ENCODE measurements at regions of chr1 and their contacts with region 1.

Region 1: GRCh38 chr1:152047730-152048402 is 11.1 kb upstream of the S100A11 start:
- DNase-seq: peak; percentile 92 to 95
- H3K4me3 ChIP-seq: peak overlapping the region; percentile 25
- H3K4me3 Mint-ChIP-seq: peak overlapping the region; percentile 72
- H3K27ac Mint-ChIP-seq: peak overlapping the region; percentile 96
- H3K4me1 ChIP-seq: peaks cover 14% of the 10 kb centered on the region
- H3K4me1 Mint-ChIP-seq: peaks cover 21% of the 10 kb centered on the region
- H3K27me3 ChIP-seq: no peaks in the 10 kb centered on the region
- H3K27me3 Mint-ChIP-seq: peaks cover 2% of the 10 kb centered on the region
- CTCF ChIP-seq: peak; percentile 63 to 80

Region 2: DNA sequence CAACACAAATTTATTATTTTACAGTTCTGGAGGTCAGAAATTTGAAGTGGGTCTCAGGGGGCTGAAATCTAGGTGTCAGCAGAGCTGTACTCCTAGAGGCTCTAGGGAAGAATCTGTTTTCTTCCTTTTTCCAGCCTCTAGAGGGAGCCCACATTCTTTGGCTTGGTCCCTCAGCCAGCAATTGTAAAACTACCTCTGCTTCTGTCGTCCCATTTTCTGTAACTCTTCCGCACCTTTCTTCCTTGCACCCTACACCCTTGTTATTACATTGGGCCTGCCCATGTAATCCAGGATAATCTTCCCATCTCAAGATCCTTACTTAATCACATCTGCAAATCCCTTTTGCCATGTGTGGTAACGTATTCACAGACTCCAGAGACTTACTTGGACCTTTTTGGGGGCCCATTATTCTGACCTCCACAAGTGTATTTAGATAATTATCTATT is 113.8 kb before region 1 on chr1:
- CTCF ChIA-PET with region 1: no interaction called
- POLR2A ChIA-PET with region 1: no interaction called
- intact Hi-C with region 1: no loop called
- DNase-seq: peak; percentile 48 to 78
- H3K4me3 ChIP-seq: no peak overlapping the region
- H3K4me3 Mint-ChIP-seq: no peak overlapping the region
- H3K27ac Mint-ChIP-seq: peak overlapping the region; percentile 63
- H3K4me1 ChIP-seq: peaks cover 32% of the 10 kb centered on the region
- H3K4me1 Mint-ChIP-seq: peaks cover 34% of the 10 kb centered on the region
- H3K27me3 ChIP-seq: no peaks in the 10 kb centered on the region
- H3K27me3 Mint-ChIP-seq: no peaks in the 10 kb centered on the region
- CTCF ChIP-seq: peak; percentile 85 to 87

Region 3: GRCh38 chr1:152034646-152035405 is 13.0 kb before region 1 on chr1:
- CTCF ChIA-PET with region 1: interaction called, 23 read pairs
- POLR2A ChIA-PET with region 1: interaction called, 16 read pairs
- intact Hi-C with region 1: loop called (anchors 1 kb)
- DNase-seq: peak; percentile 78 to 82
- H3K4me3 ChIP-seq: peak overlapping the region; percentile 85
- H3K4me3 Mint-ChIP-seq: peak overlapping the region; percentile 97
- H3K27ac Mint-ChIP-seq: peak overlapping the region; percentile 94
- H3K4me1 ChIP-seq: peaks cover 18% of the 10 kb centered on the region
- H3K4me1 Mint-ChIP-seq: peaks cover 7% of the 10 kb centered on the region
- H3K27me3 ChIP-seq: no peaks in the 10 kb centered on the region
- H3K27me3 Mint-ChIP-seq: no peaks in the 10 kb centered on the region
- CTCF ChIP-seq: peak; percentile 80 to 88

Region 4: DNA sequence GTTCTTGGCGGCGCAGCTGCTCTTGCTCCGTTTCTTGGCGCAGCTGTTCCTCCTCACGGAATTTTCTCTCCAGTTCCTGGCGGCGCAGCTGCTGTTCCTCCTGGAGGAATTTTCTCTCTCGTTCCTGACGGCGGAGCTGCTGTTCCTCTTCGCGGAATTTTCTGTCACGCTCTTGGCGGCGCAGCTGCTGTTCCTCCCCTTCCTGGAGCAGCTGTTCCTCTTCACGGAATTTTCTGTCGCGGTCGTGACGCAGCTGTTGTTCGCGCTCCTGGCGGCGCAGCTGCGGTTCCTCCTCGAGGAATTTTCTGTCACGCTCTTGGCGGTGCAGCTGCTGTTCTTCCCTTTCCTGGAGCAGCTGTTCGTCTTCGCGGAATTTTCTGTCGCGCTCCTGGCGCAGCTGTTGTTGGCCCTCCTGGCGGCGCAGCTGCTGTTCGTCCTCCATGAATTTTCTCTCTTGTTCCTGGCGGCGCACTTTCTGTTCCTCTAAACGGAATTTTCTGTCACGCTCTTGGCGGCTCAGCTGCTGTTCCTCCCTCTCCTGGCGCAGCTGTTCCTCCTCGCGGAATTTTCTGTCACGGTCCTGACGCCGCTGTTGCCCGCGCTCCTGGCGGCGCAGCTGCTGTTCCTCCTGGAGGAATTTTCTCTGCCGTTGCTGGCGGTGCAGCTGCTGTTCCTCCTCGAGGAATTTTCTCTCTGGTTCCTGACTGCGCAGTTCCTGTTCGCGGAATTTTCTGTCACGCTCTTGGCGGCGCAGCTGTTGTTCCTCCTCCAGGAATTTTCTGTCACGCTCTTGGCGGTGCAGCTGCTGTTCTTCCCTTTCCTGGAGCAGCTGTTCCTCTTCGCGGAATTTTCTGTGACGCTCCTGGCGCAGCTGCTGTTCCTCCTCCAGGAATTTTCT is 60.4 kb after region 1 on chr1:
- CTCF ChIA-PET with region 1: interaction called, 4 read pairs
- POLR2A ChIA-PET with region 1: interaction called, 4 read pairs
- intact Hi-C with region 1: loop called (anchors 1 kb)
- DNase-seq: peak; percentile 63 to 73
- H3K4me3 ChIP-seq: peak overlapping the region; percentile 42
- H3K4me3 Mint-ChIP-seq: no peak overlapping the region
- H3K27ac Mint-ChIP-seq: no peak overlapping the region
- H3K4me1 ChIP-seq: peaks cover 4% of the 10 kb centered on the region
- H3K4me1 Mint-ChIP-seq: peaks cover 10% of the 10 kb centered on the region
- H3K27me3 ChIP-seq: peaks cover 8% of the 10 kb centered on the region
- H3K27me3 Mint-ChIP-seq: peaks cover 9% of the 10 kb centered on the region
- CTCF ChIP-seq: peak in 1 of 2 experiments; percentile 0

Region 5: DNA sequence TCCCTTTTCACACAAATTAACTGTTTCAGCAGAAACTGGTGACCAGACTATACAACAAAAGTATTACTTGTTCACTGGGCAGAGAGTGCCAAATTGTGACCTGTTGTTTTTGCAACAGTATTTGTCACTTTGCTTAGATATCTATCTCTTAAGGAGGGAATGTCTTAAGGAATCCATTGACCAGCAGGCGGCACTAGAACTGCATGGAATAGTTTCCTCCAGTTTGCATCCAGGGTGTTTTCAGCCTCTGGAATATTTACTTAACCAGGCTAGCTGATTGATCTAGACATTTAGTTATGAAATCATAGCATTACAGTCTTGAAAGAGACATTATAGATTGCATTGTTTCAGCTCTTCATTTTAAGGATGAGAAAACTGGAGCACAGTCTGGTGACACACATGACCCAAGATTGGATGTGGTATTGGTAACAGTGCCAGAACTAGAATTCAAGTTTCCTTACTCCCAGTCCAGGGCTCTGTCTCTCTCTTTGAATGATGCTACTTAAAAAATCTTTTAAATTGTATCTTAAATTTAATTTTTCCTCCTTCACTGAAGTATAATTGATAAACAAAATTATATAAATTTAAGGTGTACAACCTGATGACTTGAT is 94.2 kb after region 1 on chr1:
- CTCF ChIA-PET with region 1: no interaction called
- POLR2A ChIA-PET with region 1: no interaction called
- intact Hi-C with region 1: loop called (anchors 1 kb)
- DNase-seq: peak; percentile 61 to 70
- H3K4me3 ChIP-seq: no peak overlapping the region
- H3K4me3 Mint-ChIP-seq: no peak overlapping the region
- H3K27ac Mint-ChIP-seq: no peak overlapping the region
- H3K4me1 ChIP-seq: no peaks in the 10 kb centered on the region
- H3K4me1 Mint-ChIP-seq: no peaks in the 10 kb centered on the region
- H3K27me3 ChIP-seq: no peaks in the 10 kb centered on the region
- H3K27me3 Mint-ChIP-seq: peaks cover 5% of the 10 kb centered on the region
- CTCF ChIP-seq: peak; percentile 81 to 89

Region 6: GRCh38 chr1:152227310-152227928 is 179.6 kb after region 1 on chr1:
- CTCF ChIA-PET with region 1: interaction called, 3 read pairs
- POLR2A ChIA-PET with region 1: no interaction called
- intact Hi-C with region 1: loop called (anchors 5 kb)
- DNase-seq: peak in 1 of 2 experiments; percentile 20
- H3K4me3 ChIP-seq: no peak overlapping the region
- H3K4me3 Mint-ChIP-seq: no peak overlapping the region
- H3K27ac Mint-ChIP-seq: no peak overlapping the region
- H3K4me1 ChIP-seq: no peaks in the 10 kb centered on the region
- H3K4me1 Mint-ChIP-seq: no peaks in the 10 kb centered on the region
- H3K27me3 ChIP-seq: no peaks in the 10 kb centered on the region
- H3K27me3 Mint-ChIP-seq: peaks cover 6% of the 10 kb centered on the region
- CTCF ChIP-seq: peak in 1 of 2 experiments; percentile 29

Region 7: DNA sequence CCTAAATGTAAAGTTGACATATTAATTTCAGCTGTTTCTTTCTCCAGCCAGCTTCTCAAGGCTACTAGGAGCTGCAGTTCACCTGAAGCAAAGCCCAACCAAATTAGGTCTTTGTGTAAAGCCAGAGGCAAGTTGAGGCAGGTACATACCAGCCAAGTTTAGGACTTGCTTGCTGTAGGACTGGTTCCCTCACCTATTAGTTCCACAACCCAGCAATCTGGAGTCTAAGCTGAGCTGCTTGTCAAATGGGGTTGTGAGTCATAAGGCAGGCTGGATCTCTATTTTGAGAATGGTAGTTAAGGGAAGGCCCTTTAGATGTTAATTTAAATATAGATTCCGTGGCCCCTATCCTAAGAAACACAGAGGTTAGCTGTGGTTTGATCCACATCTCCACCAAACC is 319.6 kb after region 1 on chr1:
- CTCF ChIA-PET with region 1: no interaction called
- POLR2A ChIA-PET with region 1: no interaction called
- intact Hi-C with region 1: no loop called
- DNase-seq: no peak
- H3K4me3 ChIP-seq: no peak overlapping the region
- H3K4me3 Mint-ChIP-seq: no peak overlapping the region
- H3K27ac Mint-ChIP-seq: no peak overlapping the region
- H3K4me1 ChIP-seq: no peaks in the 10 kb centered on the region
- H3K4me1 Mint-ChIP-seq: no peaks in the 10 kb centered on the region
- H3K27me3 ChIP-seq: no peaks in the 10 kb centered on the region
- H3K27me3 Mint-ChIP-seq: peaks cover 6% of the 10 kb centered on the region
- CTCF ChIP-seq: no peak

Region 8: DNA sequence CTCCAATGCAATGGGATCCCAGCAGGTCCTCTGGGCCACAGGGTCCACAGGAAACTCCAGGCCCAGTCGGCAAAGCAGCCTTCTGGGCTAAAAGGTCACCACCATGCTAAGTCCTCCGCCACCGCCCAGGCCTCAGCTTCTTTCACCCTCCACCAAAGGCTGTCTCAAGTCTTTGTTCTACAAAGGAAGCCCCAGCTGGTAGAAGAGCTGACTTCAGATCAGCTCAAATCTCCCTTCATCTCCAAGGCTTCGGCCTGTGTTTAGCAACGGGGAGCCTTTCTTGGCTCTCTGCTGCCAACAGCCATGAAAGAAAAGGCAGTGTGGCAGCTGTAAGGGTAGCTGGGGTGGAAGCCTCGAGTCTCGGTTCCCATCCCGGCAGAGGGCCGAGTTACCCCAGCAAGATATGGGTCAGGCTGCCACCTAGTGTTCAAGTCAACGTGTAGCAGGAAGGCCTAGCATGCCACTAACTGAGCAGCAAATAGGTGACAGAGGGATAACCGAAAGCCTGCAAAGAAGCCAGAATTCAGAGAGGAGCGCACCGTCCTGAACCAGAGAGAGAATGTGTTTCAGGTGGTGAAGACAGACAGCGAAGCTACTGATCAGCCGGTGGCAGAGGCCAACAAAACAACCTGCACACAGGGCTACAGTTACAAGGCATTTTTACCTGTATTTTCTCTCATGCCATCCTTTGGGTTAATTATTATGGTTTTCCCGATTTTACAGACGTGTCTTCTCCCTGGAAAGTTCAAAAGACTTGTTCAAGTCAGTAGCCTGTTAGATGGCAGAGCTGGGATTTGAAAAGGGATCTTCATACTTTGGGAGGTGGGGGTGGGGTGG is 393.0 kb after region 1 on chr1:
- CTCF ChIA-PET with region 1: interaction called, 3 read pairs
- POLR2A ChIA-PET with region 1: interaction called, 3 read pairs
- intact Hi-C with region 1: loop called (anchors 5 kb)
- DNase-seq: peak; percentile 75 to 76
- H3K4me3 ChIP-seq: no peak overlapping the region
- H3K4me3 Mint-ChIP-seq: no peak overlapping the region
- H3K27ac Mint-ChIP-seq: no peak overlapping the region
- H3K4me1 ChIP-seq: no peaks in the 10 kb centered on the region
- H3K4me1 Mint-ChIP-seq: no peaks in the 10 kb centered on the region
- H3K27me3 ChIP-seq: no peaks in the 10 kb centered on the region
- H3K27me3 Mint-ChIP-seq: peaks cover 25% of the 10 kb centered on the region
- CTCF ChIP-seq: peak; percentile 68 to 81

Measured in Caco-2 (cell line).